Activated CD4-positive, alpha-beta T cell treated with anti-CD3 and anti-CD28 coated beads for 36 hours (primary cell): ENCODE measurements at regions of chr6 and their contacts with region 1.

Region 1: GRCh38 chr6:52419809-52420670 is at the start of gene EFHC1:
- DNase-seq: peak; percentile 99
- ATAC-seq: peak; percentile 94
- H3K4me3 Mint-ChIP-seq: no peak within 1 kb of the TSS
- H3K27ac Mint-ChIP-seq: peak within 1 kb of the TSS; percentile 82
- H3K4me1 Mint-ChIP-seq: peaks cover 22% of the 10 kb centered on the region
- H3K27me3 Mint-ChIP-seq: no peaks in the 10 kb centered on the region
- total RNA-seq, gene EFHC1: 2.2 to 3.6 TPM

Region 2: GRCh38 chr6:52049252-52050050 is 370.6 kb before region 1 on chr6:
- CTCF ChIA-PET with region 1: no interaction called
- POLR2A ChIA-PET with region 1: no interaction called
- intact Hi-C with region 1: no loop called
- DNase-seq: peak; percentile 11
- ATAC-seq: no peak
- H3K4me3 Mint-ChIP-seq: no peak overlapping the region
- H3K27ac Mint-ChIP-seq: no peak overlapping the region
- H3K4me1 Mint-ChIP-seq: no peaks in the 10 kb centered on the region
- H3K27me3 Mint-ChIP-seq: peaks cover 14% of the 10 kb centered on the region

Region 3: GRCh38 chr6:52361945-52362442 is 58.0 kb before region 1 on chr6 and contains the start of gene PAQR8:
- CTCF ChIA-PET with region 1: interaction called, 5 read pairs
- POLR2A ChIA-PET with region 1: interaction called, 3 read pairs
- intact Hi-C with region 1: loop called in 1 of 2 experiments (anchors 1 kb)
- DNase-seq: peak; percentile 88
- ATAC-seq: peak; percentile 89
- H3K4me3 Mint-ChIP-seq: peak within 1 kb of the TSS; percentile 99
- H3K27ac Mint-ChIP-seq: peak within 1 kb of the TSS; percentile 94
- H3K4me1 Mint-ChIP-seq: peaks cover 42% of the 10 kb centered on the region
- H3K27me3 Mint-ChIP-seq: no peaks in the 10 kb centered on the region
- total RNA-seq, gene PAQR8: 9.0 to 9.1 TPM

Region 4: GRCh38 chr6:52407467-52407866 is 12.6 kb before region 1 on chr6:
- CTCF ChIA-PET with region 1: interaction called, 45 read pairs
- POLR2A ChIA-PET with region 1: no interaction called
- intact Hi-C with region 1: no loop called
- DNase-seq: no peak
- ATAC-seq: peak; percentile 87
- H3K4me3 Mint-ChIP-seq: no peak overlapping the region
- H3K27ac Mint-ChIP-seq: no peak overlapping the region
- H3K4me1 Mint-ChIP-seq: peaks cover 14% of the 10 kb centered on the region
- H3K27me3 Mint-ChIP-seq: no peaks in the 10 kb centered on the region

Region 5: GRCh38 chr6:52512199-52512598 is 92.2 kb after region 1 on chr6:
- CTCF ChIA-PET with region 1: no interaction called
- POLR2A ChIA-PET with region 1: no interaction called
- intact Hi-C with region 1: no loop called
- DNase-seq: no peak
- ATAC-seq: no peak
- H3K4me3 Mint-ChIP-seq: no peak overlapping the region
- H3K27ac Mint-ChIP-seq: no peak overlapping the region
- H3K4me1 Mint-ChIP-seq: peaks cover 5% of the 10 kb centered on the region
- H3K27me3 Mint-ChIP-seq: no peaks in the 10 kb centered on the region

Region 6: DNA sequence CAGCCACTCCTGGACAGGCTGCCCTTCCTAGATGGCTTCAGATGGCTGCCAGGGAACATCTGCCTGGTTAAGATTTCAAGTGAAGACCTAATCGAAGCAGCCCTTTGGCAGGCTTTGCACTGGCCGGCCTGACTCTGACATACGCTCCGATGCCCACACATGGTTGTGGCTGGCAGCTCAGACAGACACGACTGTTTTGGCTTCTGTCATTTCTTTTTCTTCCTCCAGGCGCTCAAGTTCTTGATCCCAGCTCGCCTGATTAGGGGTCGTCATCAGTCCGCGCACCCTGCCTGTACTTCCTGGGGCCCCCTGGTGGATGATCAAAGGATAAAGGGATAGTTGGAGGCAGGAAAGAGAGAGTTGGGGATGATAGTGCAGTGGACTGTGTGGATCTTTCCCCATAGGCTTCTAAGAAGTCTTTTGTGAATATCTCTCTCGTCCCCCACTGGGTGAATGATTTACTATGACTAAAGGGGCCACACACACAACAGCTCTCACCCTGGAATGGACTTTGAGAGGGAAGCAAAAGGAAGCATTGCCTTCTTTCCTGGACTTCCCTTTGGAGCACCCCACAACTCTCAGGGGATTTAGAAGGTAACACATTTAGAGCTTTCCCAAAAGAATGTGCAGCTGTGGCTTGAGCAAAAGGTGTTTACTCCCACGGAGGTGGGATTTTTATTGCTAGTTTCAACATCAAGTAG is 178.2 kb after region 1 on chr6:
- CTCF ChIA-PET with region 1: no interaction called
- POLR2A ChIA-PET with region 1: no interaction called
- intact Hi-C with region 1: loop called (anchors 2 to 5 kb)
- DNase-seq: peak; percentile 59
- ATAC-seq: peak; percentile 63
- H3K4me3 Mint-ChIP-seq: no peak overlapping the region
- H3K27ac Mint-ChIP-seq: no peak overlapping the region
- H3K4me1 Mint-ChIP-seq: peaks cover 16% of the 10 kb centered on the region
- H3K27me3 Mint-ChIP-seq: peaks cover 5% of the 10 kb centered on the region

Region 7: DNA sequence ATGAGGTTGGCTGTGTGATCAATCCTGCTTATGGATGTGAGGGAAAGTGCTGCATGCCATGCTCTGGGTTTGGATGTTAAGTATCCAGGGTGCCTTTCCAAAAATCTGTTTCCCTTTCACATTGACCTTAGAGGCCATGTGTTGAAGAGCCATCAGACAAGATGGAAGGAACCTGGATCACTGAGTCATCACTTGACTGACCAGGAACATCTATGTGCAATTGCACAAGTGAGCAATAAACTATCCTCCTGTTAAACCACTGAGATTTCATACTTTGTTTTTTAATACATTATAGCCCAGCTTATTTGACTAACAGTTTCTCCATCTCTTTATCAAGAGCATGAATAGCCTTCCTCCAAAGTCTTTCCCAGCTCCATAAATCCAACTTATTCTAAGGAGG is 233.1 kb after region 1 on chr6:
- CTCF ChIA-PET with region 1: interaction called, 15 read pairs
- POLR2A ChIA-PET with region 1: no interaction called
- intact Hi-C with region 1: no loop called
- DNase-seq: no peak
- ATAC-seq: no peak
- H3K4me3 Mint-ChIP-seq: no peak overlapping the region
- H3K27ac Mint-ChIP-seq: no peak overlapping the region
- H3K4me1 Mint-ChIP-seq: peaks cover 11% of the 10 kb centered on the region
- H3K27me3 Mint-ChIP-seq: peaks cover 6% of the 10 kb centered on the region

Region 8: GRCh38 chr6:52670502-52671409 is 250.7 kb after region 1 on chr6 and contains the start of gene TMEM14A:
- CTCF ChIA-PET with region 1: interaction called, 4 read pairs
- POLR2A ChIA-PET with region 1: interaction called, 3 read pairs
- intact Hi-C with region 1: loop called in 1 of 2 experiments (anchors 1 kb)
- DNase-seq: peak; percentile 96
- ATAC-seq: peak; percentile 99
- H3K4me3 Mint-ChIP-seq: peak within 1 kb of the TSS; percentile 81
- H3K27ac Mint-ChIP-seq: peak within 1 kb of the TSS; percentile 81
- H3K4me1 Mint-ChIP-seq: peaks cover 46% of the 10 kb centered on the region
- H3K27me3 Mint-ChIP-seq: no peaks in the 10 kb centered on the region
- total RNA-seq, gene TMEM14A: 10.4 to 18.8 TPM

Region 9: GRCh38 chr6:52712136-52712535 is 292.1 kb after region 1 on chr6:
- CTCF ChIA-PET with region 1: no interaction called
- POLR2A ChIA-PET with region 1: no interaction called
- intact Hi-C with region 1: no loop called
- DNase-seq: no peak
- ATAC-seq: no peak
- H3K4me3 Mint-ChIP-seq: no peak overlapping the region
- H3K27ac Mint-ChIP-seq: no peak overlapping the region
- H3K4me1 Mint-ChIP-seq: no peaks in the 10 kb centered on the region
- H3K27me3 Mint-ChIP-seq: peaks cover 2% of the 10 kb centered on the region

Region 10: GRCh38 chr6:53064726-53065215 is 644.7 kb after region 1 on chr6:
- CTCF ChIA-PET with region 1: no interaction called
- POLR2A ChIA-PET with region 1: no interaction called
- intact Hi-C with region 1: loop called (anchors 1 to 2 kb)
- DNase-seq: peak; percentile 98
- ATAC-seq: peak; percentile 84
- H3K4me3 Mint-ChIP-seq: peak overlapping the region; percentile 97
- H3K27ac Mint-ChIP-seq: peak overlapping the region; percentile 100
- H3K4me1 Mint-ChIP-seq: peaks cover 55% of the 10 kb centered on the region
- H3K27me3 Mint-ChIP-seq: no peaks in the 10 kb centered on the region